Activated T-helper 2 cell treated with anti-CD3 and anti-CD28 coated beads, Interferon-gamma antibody, Interleukin-2, Interleukin-4, amounts not matched to agents 10 μg/mL and 5 μg/mL and 100 μg/mL, durations not matched to agents 14 hours and 24 hours and 36 hours (primary cell): ENCODE measurements at regions of chr18 and their contacts with region 1.

Region 1: GRCh38 chr18:36757081-36757480 is 71.7 kb downstream of the TPGS2 start:
- DNase-seq: no peak
- H3K4me3 Mint-ChIP-seq: no peak overlapping the region
- H3K27ac Mint-ChIP-seq: no peak overlapping the region
- H3K4me1 Mint-ChIP-seq: peaks cover 11% of the 10 kb centered on the region
- H3K27me3 Mint-ChIP-seq: peaks cover 2% of the 10 kb centered on the region

Region 2: DNA sequence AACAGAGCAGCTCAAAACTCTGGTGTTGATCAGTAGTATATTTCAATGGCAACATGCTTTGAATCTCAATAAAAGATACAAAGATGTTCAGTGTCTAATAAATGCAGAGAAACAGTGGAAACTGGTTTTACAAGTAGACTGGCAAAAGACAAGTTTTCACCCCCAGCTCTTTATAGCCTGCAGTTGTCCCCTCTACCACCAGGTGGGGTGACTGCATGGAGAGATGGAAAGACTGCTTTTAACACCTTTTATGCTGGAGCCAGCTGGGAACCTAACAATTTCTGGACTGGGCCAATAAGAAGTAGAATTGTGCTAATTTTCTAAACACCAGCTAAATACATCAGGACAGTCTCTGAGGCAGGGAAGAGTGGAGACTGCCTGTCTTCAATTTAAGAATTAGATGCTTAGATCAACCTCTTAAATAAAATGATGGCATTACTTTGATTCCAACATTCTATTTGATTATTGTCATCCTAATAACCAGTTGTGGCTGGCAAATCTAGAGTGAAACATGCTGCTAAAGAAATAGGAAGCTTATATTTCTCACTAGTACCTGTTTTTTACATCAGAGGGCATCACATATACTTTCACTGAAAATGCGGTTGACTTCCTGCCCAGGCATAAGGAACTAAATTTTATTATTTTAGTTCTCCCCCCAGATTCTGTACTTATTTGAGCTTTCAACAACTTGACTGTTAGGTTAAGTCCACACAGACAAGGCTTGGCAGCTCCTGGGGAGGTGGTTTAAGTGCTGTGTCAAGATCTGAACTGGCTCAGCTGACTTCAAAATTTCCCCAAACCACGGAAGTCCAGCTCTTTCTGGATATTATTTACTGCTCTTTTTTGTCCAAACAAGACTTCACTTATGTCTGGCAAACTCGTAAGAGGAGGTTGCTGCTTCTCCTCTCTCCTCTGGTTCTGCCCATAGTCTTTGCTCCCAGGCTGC is 68.8 kb before region 1 on chr18:
- intact Hi-C with region 1: loop called (anchors 2 kb)
- DNase-seq: peak; percentile 27
- H3K4me3 Mint-ChIP-seq: no peak overlapping the region
- H3K27ac Mint-ChIP-seq: no peak overlapping the region
- H3K4me1 Mint-ChIP-seq: no peaks in the 10 kb centered on the region
- H3K27me3 Mint-ChIP-seq: peaks cover 2% of the 10 kb centered on the region